CD4-positive, alpha-beta memory T cell (primary cell): ENCODE measurements at regions of chr3 and their contacts with region 1.

Region 1: GRCh38 chr3:49120438-49121131 is at the start of gene USP19:
- DNase-seq: peak; percentile 94 to 95 (median 95)
- H3K4me3 ChIP-seq: peak within 1 kb of the TSS; percentile 45 to 94
- H3K4me3 Mint-ChIP-seq: peak within 1 kb of the TSS; percentile 86 to 90 (median 89)
- H3K27ac ChIP-seq: peak within 1 kb of the TSS; percentile 92
- H3K27ac Mint-ChIP-seq: peak within 1 kb of the TSS; percentile 88 to 95 (median 92)
- H3K4me1 ChIP-seq: peaks cover 26% of the 10 kb centered on the region
- H3K4me1 Mint-ChIP-seq: peaks cover 7 to 35% (median 19%) of the 10 kb centered on the region in 4 donors
- H3K27me3 ChIP-seq: no peaks in the 10 kb centered on the region
- H3K27me3 Mint-ChIP-seq: no peaks in the 10 kb centered on the region
- total RNA-seq, gene USP19: 91.7 to 105 TPM

Region 2: GRCh38 chr3:49007068-49007770 is 113.4 kb before region 1 on chr3 and contains the start of gene WDR6:
- CTCF ChIA-PET with region 1: interaction called, 7 read pairs
- POLR2A ChIA-PET with region 1: interaction called, 12 read pairs
- intact Hi-C with region 1: no loop called
- DNase-seq: peak; percentile 95 to 98 (median 97)
- H3K4me3 ChIP-seq: peak within 1 kb of the TSS; percentile 81 to 97
- H3K4me3 Mint-ChIP-seq: peak within 1 kb of the TSS; percentile 93 to 99 (median 98)
- H3K27ac ChIP-seq: peak within 1 kb of the TSS; percentile 87
- H3K27ac Mint-ChIP-seq: peak within 1 kb of the TSS; percentile 95 to 100 (median 99)
- H3K4me1 ChIP-seq: peaks cover 20% of the 10 kb centered on the region
- H3K4me1 Mint-ChIP-seq: peaks cover 15 to 37% (median 24%) of the 10 kb centered on the region in 4 donors
- H3K27me3 ChIP-seq: no peaks in the 10 kb centered on the region
- H3K27me3 Mint-ChIP-seq: no peaks in the 10 kb centered on the region
- total RNA-seq, gene WDR6: 287 to 295 TPM

Region 3: GRCh38 chr3:49028673-49029562 is 91.7 kb before region 1 on chr3 and contains the start of gene IMPDH2:
- CTCF ChIA-PET with region 1: no interaction called
- POLR2A ChIA-PET with region 1: interaction called, 21 read pairs
- intact Hi-C with region 1: no loop called
- DNase-seq: peak; percentile 91 to 93 (median 93)
- H3K4me3 ChIP-seq: peak within 1 kb of the TSS; percentile 64 to 77
- H3K4me3 Mint-ChIP-seq: peak within 1 kb of the TSS; percentile 90 to 97 (median 92)
- H3K27ac ChIP-seq: peak within 1 kb of the TSS; percentile 93
- H3K27ac Mint-ChIP-seq: peak within 1 kb of the TSS; percentile 94 to 100 (median 99)
- H3K4me1 ChIP-seq: peaks cover 21% of the 10 kb centered on the region
- H3K4me1 Mint-ChIP-seq: peaks cover 17 to 52% (median 24%) of the 10 kb centered on the region in 4 donors
- H3K27me3 ChIP-seq: no peaks in the 10 kb centered on the region
- H3K27me3 Mint-ChIP-seq: no peaks in the 10 kb centered on the region
- total RNA-seq, gene IMPDH2: 87.5 to 89.6 TPM

Region 4: GRCh38 chr3:49158108-49158709 is 37.6 kb after region 1 on chr3:
- CTCF ChIA-PET with region 1: interaction called, 4 read pairs
- POLR2A ChIA-PET with region 1: interaction called, 3 read pairs
- intact Hi-C with region 1: loop called (anchors 2 kb)
- DNase-seq: peak; percentile 54 to 77 (median 63)
- H3K4me3 ChIP-seq: no peak overlapping the region
- H3K4me3 Mint-ChIP-seq: no peak overlapping the region
- H3K27ac ChIP-seq: no peak overlapping the region
- H3K27ac Mint-ChIP-seq: peak overlapping the region; percentile 8 to 91 (median 64)
- H3K4me1 ChIP-seq: no peaks in the 10 kb centered on the region
- H3K4me1 Mint-ChIP-seq: peaks cover 2 to 11% (median 5%) of the 10 kb centered on the region in 4 donors
- H3K27me3 ChIP-seq: no peaks in the 10 kb centered on the region
- H3K27me3 Mint-ChIP-seq: no peaks in the 10 kb centered on the region

Region 5: GRCh38 chr3:49171119-49171774 is 50.7 kb after region 1 on chr3 and contains the start of gene KLHDC8B:
- CTCF ChIA-PET with region 1: interaction called, 3 read pairs
- POLR2A ChIA-PET with region 1: interaction called, 10 read pairs
- intact Hi-C with region 1: loop called (anchors 2 kb)
- DNase-seq: peak; percentile 74 to 77 (median 76)
- H3K4me3 ChIP-seq: peak within 1 kb of the TSS; percentile 57 to 72
- H3K4me3 Mint-ChIP-seq: peak within 1 kb of the TSS; percentile 85 to 90 (median 88)
- H3K27ac ChIP-seq: peak within 1 kb of the TSS; percentile 32
- H3K27ac Mint-ChIP-seq: peak within 1 kb of the TSS; percentile 51 to 85 (median 66)
- H3K4me1 ChIP-seq: peaks cover 21% of the 10 kb centered on the region
- H3K4me1 Mint-ChIP-seq: peaks cover 6 to 30% (median 16%) of the 10 kb centered on the region in 4 donors
- H3K27me3 ChIP-seq: no peaks in the 10 kb centered on the region
- H3K27me3 Mint-ChIP-seq: no peaks in the 10 kb centered on the region
- total RNA-seq, gene KLHDC8B: 1.9 to 2.0 TPM